Breast epithelium (tissue), 4 donors: ENCODE measurements at regions of chr19 and their contacts with region 1.

Region 1: GRCh38 chr19:898663-899062 is 5.4 kb downstream of the RNU6-9 start:
- DNase-seq: no peak
- H3K4me3 ChIP-seq: no peak overlapping the region
- H3K27ac ChIP-seq: no peak overlapping the region
- H3K4me1 ChIP-seq: no peaks in the 10 kb centered on the region
- H3K27me3 ChIP-seq: no peaks in the 10 kb centered on the region
- CTCF ChIP-seq: no peak
- POLR2A ChIP-seq: no peak

Region 2: GRCh38 chr19:821825-822503 is 76.7 kb before region 1 on chr19 and contains the start of gene PLPPR3:
- intact Hi-C with region 1: no loop called
- DNase-seq: no peak
- H3K4me3 ChIP-seq: peak within 1 kb of the TSS; percentile 26 to 71 (median 49)
- H3K27ac ChIP-seq: peak within 1 kb of the TSS in 1 of 2 donors; percentile 12
- H3K4me1 ChIP-seq: peaks cover 4 to 7% of the 10 kb centered on the region in 2 donors
- H3K27me3 ChIP-seq: peaks cover 12 to 19% of the 10 kb centered on the region in 2 donors
- CTCF ChIP-seq: no peak
- POLR2A ChIP-seq: no peak
- total RNA-seq, gene PLPPR3: 6.9 to 9.1 TPM in 2 of 3 donors, not detected in the other

Region 3: GRCh38 chr19:913080-913748 is 14.6 kb after region 1 on chr19 and contains the start of gene R3HDM4:
- intact Hi-C with region 1: no loop called
- DNase-seq: peak; percentile 76 to 84
- H3K4me3 ChIP-seq: peak within 1 kb of the TSS; percentile 80 to 98 (median 85)
- H3K27ac ChIP-seq: peak within 1 kb of the TSS; percentile 96 to 98
- H3K4me1 ChIP-seq: peaks cover 3 to 16% of the 10 kb centered on the region in 2 donors
- H3K27me3 ChIP-seq: peaks cover 5 to 8% of the 10 kb centered on the region in 2 donors
- CTCF ChIP-seq: no peak
- POLR2A ChIP-seq: no peak
- total RNA-seq, gene R3HDM4: 31.8 to 41.6 (median 41.0) TPM

Region 4: DNA sequence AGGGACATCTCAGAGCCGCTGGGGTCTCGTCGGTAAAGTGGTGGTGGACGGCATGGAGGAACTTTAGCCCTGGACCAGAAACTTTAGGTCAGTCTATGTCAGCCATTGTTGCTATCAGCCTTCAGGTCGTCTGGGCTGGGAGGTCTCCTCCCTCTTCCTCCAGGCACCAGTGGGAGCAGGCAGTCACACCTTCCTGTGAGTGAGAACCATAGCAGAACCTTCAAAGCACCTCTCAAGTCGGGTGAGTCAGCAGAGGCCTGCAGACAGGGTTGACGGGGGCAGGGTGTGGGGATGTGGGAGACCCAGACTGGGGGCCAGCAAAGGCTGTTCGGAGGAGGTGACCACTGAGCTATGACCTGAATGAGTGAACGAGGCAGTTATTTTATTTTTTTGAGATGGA is 290.8 kb after region 1 on chr19:
- intact Hi-C with region 1: loop called (anchors 5 kb)
- DNase-seq: no peak
- H3K4me3 ChIP-seq: no peak overlapping the region
- H3K27ac ChIP-seq: no peak overlapping the region
- H3K4me1 ChIP-seq: no peaks in the 10 kb centered on the region
- H3K27me3 ChIP-seq: no peaks in the 10 kb centered on the region
- CTCF ChIP-seq: no peak
- POLR2A ChIP-seq: no peak